Activated CD4-positive, alpha-beta memory T cell treated with anti-CD3 and anti-CD28 coated beads, Interleukin-2, amount 10 ng/mL, durations not matched to agents 7 days and 5 days (primary cell): ENCODE measurements at regions of chr1 and their contacts with region 1.

Region 1: GRCh38 chr1:95072532-95073419 is at the start of gene ALG14:
- DNase-seq: peak; percentile 93
- H3K4me3 Mint-ChIP-seq: peak within 1 kb of the TSS; percentile 92
- H3K27ac Mint-ChIP-seq: peak within 1 kb of the TSS; percentile 85
- H3K4me1 Mint-ChIP-seq: peaks cover 19% of the 10 kb centered on the region
- H3K27me3 Mint-ChIP-seq: no peaks in the 10 kb centered on the region
- total RNA-seq, gene ALG14: 2.4 to 2.7 TPM

Region 2: GRCh38 chr1:95043141-95043980 is 29.4 kb before region 1 on chr1:
- CTCF ChIA-PET with region 1: interaction called, 11 read pairs
- POLR2A ChIA-PET with region 1: no interaction called
- DNase-seq: peak; percentile 79
- H3K4me3 Mint-ChIP-seq: no peak overlapping the region
- H3K27ac Mint-ChIP-seq: no peak overlapping the region
- H3K4me1 Mint-ChIP-seq: no peaks in the 10 kb centered on the region
- H3K27me3 Mint-ChIP-seq: no peaks in the 10 kb centered on the region

Region 3: DNA sequence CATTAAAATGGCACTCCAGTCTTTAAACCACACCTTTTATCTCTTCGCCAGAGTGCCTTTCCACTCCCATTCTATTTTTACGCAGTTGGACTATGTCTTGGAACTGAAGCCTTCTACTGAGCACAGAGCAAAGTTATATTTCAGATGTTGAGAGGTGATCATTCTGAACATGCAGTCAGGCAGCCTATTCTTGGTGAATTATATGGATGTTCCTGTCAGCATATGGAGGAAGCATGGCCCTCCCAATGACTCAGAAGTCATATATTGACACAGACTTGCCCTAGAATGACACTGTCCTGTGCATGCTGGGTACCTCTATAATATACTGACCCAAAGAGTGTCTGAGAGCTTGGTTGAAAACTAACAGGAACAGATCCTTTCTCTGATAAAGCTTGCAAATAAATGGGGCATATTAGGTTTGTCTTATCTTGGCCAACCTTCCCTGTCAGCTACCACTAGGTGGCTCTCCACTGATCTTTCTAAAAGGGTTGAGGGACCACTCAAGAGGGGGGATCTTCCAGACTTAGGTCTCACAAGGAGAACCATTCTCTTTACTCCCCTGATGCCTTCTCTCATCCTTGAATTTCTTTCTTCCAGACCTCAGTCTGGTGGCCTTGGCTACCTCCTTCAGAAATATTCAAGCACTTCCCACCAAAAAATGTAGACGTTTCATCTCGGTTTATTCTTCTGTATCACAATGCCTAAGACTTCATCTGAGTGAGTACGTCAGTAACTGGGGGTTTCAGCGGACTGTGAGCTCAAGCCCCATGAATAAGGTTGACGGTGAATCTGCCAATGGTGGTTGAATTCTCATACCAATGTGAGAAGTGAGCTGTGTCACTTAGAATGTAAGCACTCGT is 11.8 kb after region 1 on chr1:
- CTCF ChIA-PET with region 1: interaction called, 26 read pairs
- POLR2A ChIA-PET with region 1: no interaction called
- DNase-seq: peak; percentile 18
- H3K4me3 Mint-ChIP-seq: no peak overlapping the region
- H3K27ac Mint-ChIP-seq: no peak overlapping the region
- H3K4me1 Mint-ChIP-seq: no peaks in the 10 kb centered on the region
- H3K27me3 Mint-ChIP-seq: peaks cover 19% of the 10 kb centered on the region